PC-3 (cell line): ENCODE measurements at regions of chr10 and their contacts with region 1.

Region 1: GRCh38 chr10:53434413-53434812 is 661.8 kb upstream of the MBL2 start:
- DNase-seq: no peak
- ATAC-seq: no peak
- H3K4me3 ChIP-seq: no peak overlapping the region
- H3K27ac ChIP-seq: no peak overlapping the region
- H3K4me1 ChIP-seq: no peaks in the 10 kb centered on the region
- H3K27me3 ChIP-seq: 0 out of 2 replicates have a peak, but pooled peaks cover 4% of the 10 kb centered on the region
- CTCF ChIP-seq: no peak

Region 2: GRCh38 chr10:53123311-53123710 is 311.1 kb before region 1 on chr10:
- CTCF ChIA-PET with region 1: no interaction called
- POLR2A ChIA-PET with region 1: no interaction called
- intact Hi-C with region 1: no loop called
- DNase-seq: peak; percentile 40
- ATAC-seq: no peak
- H3K4me3 ChIP-seq: no peak overlapping the region
- H3K27ac ChIP-seq: no peak overlapping the region
- H3K4me1 ChIP-seq: no peaks in the 10 kb centered on the region
- H3K27me3 ChIP-seq: no peaks in the 10 kb centered on the region
- CTCF ChIP-seq: no peak

Region 3: DNA sequence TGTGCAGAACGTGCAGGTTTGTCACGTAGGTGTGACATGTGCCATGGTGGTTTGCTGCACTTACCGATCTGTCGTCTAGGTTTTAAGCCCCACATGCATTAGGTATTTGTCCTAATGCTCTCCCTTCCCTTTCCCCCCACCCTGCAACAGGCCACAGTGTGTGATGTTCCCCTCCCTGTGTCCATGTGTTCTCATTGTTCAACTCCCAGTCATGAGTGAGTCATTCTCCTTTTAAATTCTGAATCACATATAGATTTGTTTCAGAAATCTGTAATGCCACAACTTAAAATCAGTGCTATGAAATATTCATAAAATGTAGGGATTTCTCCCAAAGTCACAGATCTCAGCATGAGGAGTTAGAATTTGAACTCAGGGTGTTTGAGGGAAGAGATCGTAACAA is 109.3 kb before region 1 on chr10:
- CTCF ChIA-PET with region 1: no interaction called
- POLR2A ChIA-PET with region 1: no interaction called
- intact Hi-C with region 1: loop called (anchors 5 kb)
- DNase-seq: peak; percentile 98
- ATAC-seq: peak; percentile 97
- H3K4me3 ChIP-seq: no peak overlapping the region
- H3K27ac ChIP-seq: peak overlapping the region; percentile 5; the same call in 1 of the 2 replicates
- H3K4me1 ChIP-seq: peaks cover 18% of the 10 kb centered on the region
- H3K27me3 ChIP-seq: no peaks in the 10 kb centered on the region
- CTCF ChIP-seq: no peak

Region 4: GRCh38 chr10:53463539-53463938 is 29.1 kb after region 1 on chr10:
- CTCF ChIA-PET with region 1: no interaction called
- POLR2A ChIA-PET with region 1: no interaction called
- intact Hi-C with region 1: loop called (anchors 2 kb)
- DNase-seq: no peak
- ATAC-seq: no peak
- H3K4me3 ChIP-seq: no peak overlapping the region
- H3K27ac ChIP-seq: no peak overlapping the region
- H3K4me1 ChIP-seq: no peaks in the 10 kb centered on the region
- H3K27me3 ChIP-seq: no peaks in the 10 kb centered on the region
- CTCF ChIP-seq: no peak